Activated T-helper 1 cell treated with anti-CD3 and anti-CD28 coated beads, Interleukin-12 subunit alpha, Interleukin-12 subunit beta, Interleukin-2, Interleukin-4 antibody, amounts not matched to agents 30 ng/mL and 10 ng/mL and 1 ng/mL, durations not matched to agents 14 hours and 24 hours and 36 hours (primary cell): ENCODE measurements at regions of chr9 and their contacts with region 1.

Region 1: DNA sequence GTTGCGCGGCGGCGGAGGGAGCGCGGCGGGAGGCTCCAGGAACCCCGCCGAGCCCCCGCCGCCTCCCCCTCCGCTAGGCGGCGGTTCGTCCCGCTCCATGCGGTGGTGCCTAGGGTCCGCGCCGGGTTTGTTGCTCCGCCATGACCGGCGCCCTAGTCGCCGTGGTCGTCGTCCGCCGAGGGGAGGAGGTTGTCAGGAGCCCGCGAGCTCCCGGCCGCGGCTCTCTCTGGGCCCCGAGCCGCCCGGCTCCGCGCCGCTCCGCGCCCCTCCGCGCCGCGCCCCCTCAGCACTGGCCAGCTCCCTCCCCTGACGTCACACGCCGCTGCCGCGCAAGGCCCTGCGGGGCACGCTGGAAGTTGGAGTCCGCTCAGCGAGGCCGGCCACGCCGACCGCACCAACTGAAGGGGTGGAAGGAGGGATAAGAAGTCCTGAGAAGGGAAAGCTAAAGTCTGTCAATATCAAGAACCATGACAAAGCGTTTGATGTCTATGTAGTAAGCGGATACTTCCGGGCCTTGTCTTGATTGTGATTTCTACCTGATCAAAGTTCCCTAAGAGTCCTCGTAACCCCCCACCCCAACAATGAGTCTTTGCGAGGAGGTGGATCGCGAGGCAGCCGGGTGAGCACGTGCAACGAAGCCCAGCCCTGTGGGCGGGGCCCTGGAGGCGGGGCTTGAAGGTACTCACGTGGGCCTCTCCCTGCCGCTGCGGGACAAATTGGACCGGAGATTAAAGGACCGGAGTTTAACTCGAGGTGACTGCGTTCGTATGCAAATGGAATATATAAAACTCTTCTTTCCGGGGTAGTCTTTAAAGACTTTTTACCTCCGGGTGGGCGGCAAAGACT is at the start of gene NR6A1:
- DNase-seq: peak; percentile 92
- H3K4me3 Mint-ChIP-seq: peak within 1 kb of the TSS; percentile 91
- H3K27ac Mint-ChIP-seq: peak within 1 kb of the TSS; percentile 83
- H3K4me1 Mint-ChIP-seq: peaks cover 51% of the 10 kb centered on the region
- H3K27me3 Mint-ChIP-seq: peaks cover 66% of the 10 kb centered on the region
- total RNA-seq, gene NR6A1: 1.7 and 2.3 TPM in 2 replicates

Region 2: GRCh38 chr9:124695280-124695890 is 75.9 kb before region 1 on chr9:
- intact Hi-C with region 1: no loop called
- DNase-seq: no peak
- H3K4me3 Mint-ChIP-seq: no peak overlapping the region
- H3K27ac Mint-ChIP-seq: no peak overlapping the region
- H3K4me1 Mint-ChIP-seq: no peaks in the 10 kb centered on the region
- H3K27me3 Mint-ChIP-seq: no peaks in the 10 kb centered on the region

Region 3: DNA sequence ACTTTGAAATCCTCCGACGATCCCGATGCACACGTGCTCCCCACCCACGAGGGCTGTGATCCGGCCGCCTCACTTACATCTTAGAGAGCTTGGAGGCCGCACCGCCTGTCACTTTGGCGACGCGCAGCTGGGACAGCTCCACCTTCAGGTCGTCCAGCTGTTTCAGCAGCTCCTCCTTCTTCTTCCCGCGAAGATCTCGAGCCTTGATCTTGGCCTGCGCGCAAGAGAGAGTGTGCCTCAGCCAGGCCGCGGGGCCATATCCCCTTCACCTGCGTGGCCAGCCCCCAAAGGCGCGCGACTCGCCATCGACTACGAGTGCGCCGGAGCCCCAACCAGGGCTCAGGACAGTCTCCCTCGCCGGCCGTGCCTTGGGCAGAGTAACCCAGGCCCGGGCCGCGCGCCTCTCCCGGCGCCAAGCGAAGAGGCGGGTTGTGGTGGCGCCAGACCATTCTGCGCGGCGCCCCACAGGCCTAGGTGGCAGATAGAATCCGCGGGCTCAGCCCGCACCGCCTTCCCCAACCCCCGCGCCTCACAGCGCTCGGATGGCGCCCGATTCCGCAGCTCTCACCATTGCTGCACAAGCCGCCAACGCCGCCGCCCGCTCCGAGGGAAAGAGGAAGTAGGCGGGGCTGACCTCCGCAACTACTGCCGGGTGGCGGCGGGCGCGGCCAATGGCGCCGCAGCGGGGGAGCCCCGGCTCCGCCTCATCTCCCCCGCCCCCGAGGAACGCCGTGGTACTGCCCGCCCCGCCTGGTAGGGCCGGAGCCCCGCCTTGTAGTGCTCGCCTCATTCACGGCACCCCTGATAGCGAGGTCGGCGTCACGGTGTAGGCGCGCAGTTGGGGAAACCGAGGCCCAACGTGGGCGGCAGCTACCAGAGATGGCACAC is 90.3 kb after region 1 on chr9 and contains the starts of genes ARPC5L and RPL35:
- intact Hi-C with region 1: loop called (anchors 2 kb)
- DNase-seq: peak; percentile 95
- H3K4me3 Mint-ChIP-seq: peak within 1 kb of the TSS; percentile 96
- H3K27ac Mint-ChIP-seq: peak within 1 kb of the TSS; percentile 98
- H3K4me1 Mint-ChIP-seq: peaks cover 35% of the 10 kb centered on the region
- H3K27me3 Mint-ChIP-seq: no peaks in the 10 kb centered on the region
- total RNA-seq, gene ARPC5L: 111 and 115 TPM in 2 replicates
- total RNA-seq, gene RPL35: 1,681 and 1,750 TPM in 2 replicates

Region 4: GRCh38 chr9:124894741-124895170 is 123.5 kb after region 1 on chr9:
- intact Hi-C with region 1: loop called (anchors 1 kb)
- DNase-seq: peak; percentile 7
- H3K4me3 Mint-ChIP-seq: no peak overlapping the region
- H3K27ac Mint-ChIP-seq: peak overlapping the region; percentile 1
- H3K4me1 Mint-ChIP-seq: peaks cover 11% of the 10 kb centered on the region
- H3K27me3 Mint-ChIP-seq: no peaks in the 10 kb centered on the region

Region 5: GRCh38 chr9:125143375-125144090 is 372.3 kb after region 1 on chr9 and contains the start of gene SCAI:
- intact Hi-C with region 1: loop called (anchors 1 kb)
- DNase-seq: peak; percentile 98
- H3K4me3 Mint-ChIP-seq: peak within 1 kb of the TSS; percentile 96
- H3K27ac Mint-ChIP-seq: peak within 1 kb of the TSS; percentile 85
- H3K4me1 Mint-ChIP-seq: peaks cover 46% of the 10 kb centered on the region
- H3K27me3 Mint-ChIP-seq: no peaks in the 10 kb centered on the region
- total RNA-seq, gene SCAI: 10.0 and 11.7 TPM in 2 replicates

Region 6: DNA sequence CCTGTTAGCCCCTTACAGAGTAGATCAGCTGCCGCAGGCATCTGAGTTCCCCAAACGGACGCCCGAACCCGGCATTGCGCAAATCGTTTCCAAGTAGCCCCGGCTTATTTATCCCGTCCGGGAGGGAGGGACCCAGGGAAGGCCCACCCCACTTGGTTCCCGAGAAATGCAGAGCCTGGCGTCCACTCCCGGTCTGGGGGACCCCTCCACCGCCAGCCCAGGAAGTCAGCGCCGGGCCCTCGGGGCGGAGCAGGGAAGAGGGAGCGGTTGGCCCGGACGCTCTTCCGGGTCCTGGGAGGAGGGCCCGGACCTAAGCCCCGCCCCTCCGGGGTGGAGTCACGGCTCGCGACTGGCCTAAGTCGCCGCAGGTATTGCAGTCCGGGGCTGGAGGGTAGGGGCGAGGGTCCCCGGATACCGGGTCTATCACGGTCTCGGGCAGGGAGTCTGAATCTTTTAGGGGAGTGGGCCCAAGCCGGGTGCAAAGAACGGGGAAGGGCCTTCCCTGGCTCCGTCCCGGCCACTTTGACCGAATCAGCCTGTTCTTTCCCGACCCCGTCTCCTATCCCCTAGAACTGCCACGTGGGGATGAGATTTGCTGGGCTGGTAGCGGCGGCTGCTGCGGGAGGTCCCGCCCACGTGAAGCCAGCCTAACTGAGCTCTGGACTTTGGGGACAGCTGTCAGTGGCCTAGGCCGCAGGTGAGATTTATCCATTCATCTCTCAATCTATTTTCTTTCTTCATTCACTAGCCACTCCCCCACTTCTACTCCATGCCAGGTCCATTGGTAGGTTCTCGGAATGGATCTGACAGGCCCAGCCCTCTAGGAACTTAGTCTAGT is 429.2 kb after region 1 on chr9 and contains the start of gene RABEPK:
- intact Hi-C with region 1: loop called (anchors 1 kb)
- DNase-seq: peak; percentile 90
- H3K4me3 Mint-ChIP-seq: peak within 1 kb of the TSS; percentile 95
- H3K27ac Mint-ChIP-seq: peak within 1 kb of the TSS; percentile 89
- H3K4me1 Mint-ChIP-seq: peaks cover 21% of the 10 kb centered on the region
- H3K27me3 Mint-ChIP-seq: peaks cover 2% of the 10 kb centered on the region
- total RNA-seq, gene RABEPK: 32.8 and 33.1 TPM in 2 replicates

Region 7: GRCh38 chr9:125261501-125262293 is 490.5 kb after region 1 on chr9 and contains the start of gene GAPVD1:
- intact Hi-C with region 1: loop called (anchors 5 kb)
- DNase-seq: peak; percentile 88
- H3K4me3 Mint-ChIP-seq: peak within 1 kb of the TSS; percentile 99
- H3K27ac Mint-ChIP-seq: peak within 1 kb of the TSS; percentile 93
- H3K4me1 Mint-ChIP-seq: peaks cover 42% of the 10 kb centered on the region
- H3K27me3 Mint-ChIP-seq: no peaks in the 10 kb centered on the region
- total RNA-seq, gene GAPVD1: 53.6 and 56.8 TPM in 2 replicates

Region 8: DNA sequence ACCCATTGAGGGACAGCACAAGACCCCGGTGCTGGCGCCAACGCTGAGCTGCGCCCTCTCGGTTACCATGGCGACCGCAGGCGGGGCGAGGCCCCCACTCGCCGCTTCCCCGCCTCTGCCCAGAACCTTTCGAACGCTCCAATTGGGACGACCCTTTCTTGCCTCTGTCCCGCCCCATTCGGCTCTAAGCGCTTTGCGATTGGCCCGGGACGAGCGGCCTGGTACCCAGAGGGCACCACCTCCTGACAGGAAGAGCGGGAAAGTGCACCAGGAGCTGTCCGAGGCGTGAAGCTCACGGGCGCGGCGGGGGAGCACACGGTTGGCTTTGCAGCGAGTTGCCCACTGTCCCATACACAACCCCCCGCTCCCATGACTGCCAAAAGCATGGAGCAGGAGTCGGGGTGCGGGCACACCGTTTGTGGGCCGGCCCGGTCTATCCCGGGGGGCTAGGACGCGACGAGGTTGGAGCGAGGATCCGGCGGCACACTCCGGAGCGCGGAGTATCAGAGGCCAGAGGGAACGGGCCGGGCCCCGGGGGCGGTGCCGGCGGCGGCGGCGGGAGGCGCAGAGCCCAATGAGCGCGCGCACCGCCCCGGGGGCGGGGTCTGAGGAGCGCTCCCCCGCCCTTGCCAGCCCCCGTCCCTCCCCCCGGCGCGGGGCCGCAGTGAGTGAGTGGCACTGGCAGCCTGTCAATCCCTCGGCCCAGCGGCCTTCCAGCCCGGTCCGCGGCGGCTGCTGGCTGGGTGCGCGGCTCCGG is 975.0 kb after region 1 on chr9:
- intact Hi-C with region 1: loop called (anchors 5 kb)
- DNase-seq: peak; percentile 88
- H3K4me3 Mint-ChIP-seq: peak overlapping the region; percentile 88
- H3K27ac Mint-ChIP-seq: peak overlapping the region; percentile 91
- H3K4me1 Mint-ChIP-seq: peaks cover 39% of the 10 kb centered on the region
- H3K27me3 Mint-ChIP-seq: peaks cover 25% of the 10 kb centered on the region